Activated T-helper 1 cell treated with anti-CD3 and anti-CD28 coated beads, Interleukin-12 subunit alpha, Interleukin-12 subunit beta, Interleukin-2, Interleukin-4 antibody, amounts not matched to agents 30 ng/mL and 10 ng/mL and 1 ng/mL, durations not matched to agents 14 hours and 24 hours and 36 hours (primary cell): ENCODE measurements at regions of chr12 and their contacts with region 1.

Region 1: DNA sequence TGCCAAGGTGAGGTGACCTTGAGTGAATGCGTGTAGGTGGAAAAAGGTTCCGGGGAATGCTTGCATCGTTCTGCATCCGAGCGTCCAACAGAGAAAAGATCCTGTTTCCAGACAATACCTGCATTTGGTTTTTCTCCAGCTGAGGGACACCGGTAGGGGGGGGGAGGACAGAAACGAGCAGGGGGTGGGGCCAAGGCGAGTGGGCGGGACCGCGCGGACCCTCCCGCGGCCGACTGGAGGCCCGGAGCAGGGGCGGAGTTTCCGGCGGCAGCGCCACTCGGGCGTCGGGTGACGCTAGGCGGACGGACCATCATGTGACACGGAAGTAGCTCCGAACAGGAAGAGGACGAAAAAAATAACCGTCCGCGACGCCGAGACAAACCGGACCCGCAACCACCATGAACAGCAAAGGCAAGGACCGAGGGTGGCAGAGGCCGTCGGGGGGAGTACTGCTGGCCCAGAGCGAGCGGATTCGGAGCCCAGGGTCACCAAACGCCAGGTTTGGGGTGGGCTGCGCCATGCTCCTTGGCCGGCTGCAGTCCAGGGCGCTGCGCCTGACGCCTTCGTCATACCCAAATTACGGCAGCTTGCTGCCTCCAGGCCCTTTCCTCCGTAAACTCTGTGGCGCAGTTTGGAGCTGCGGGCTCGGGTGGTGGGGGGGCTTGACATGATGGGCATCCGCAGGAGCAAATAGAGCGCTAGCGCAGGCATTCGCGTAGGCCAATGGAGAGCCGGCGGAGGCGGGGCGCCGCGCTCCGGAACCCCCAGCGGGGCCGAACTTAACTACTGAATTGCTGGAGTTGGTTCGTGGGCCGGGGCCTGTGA is at the start of gene DAZAP2:
- DNase-seq: peak; percentile 92
- H3K4me3 Mint-ChIP-seq: peak within 1 kb of the TSS; percentile 91
- H3K27ac Mint-ChIP-seq: peak within 1 kb of the TSS; percentile 99
- H3K4me1 Mint-ChIP-seq: peaks cover 45% of the 10 kb centered on the region
- H3K27me3 Mint-ChIP-seq: no peaks in the 10 kb centered on the region
- total RNA-seq, gene DAZAP2: 163 and 169 TPM in 2 replicates

Region 2: GRCh38 chr12:51025836-51026638 is 212.7 kb before region 1 on chr12 and contains the start of gene SLC11A2:
- intact Hi-C with region 1: loop called (anchors 1 kb)
- DNase-seq: peak; percentile 91
- H3K4me3 Mint-ChIP-seq: peak within 1 kb of the TSS; percentile 92
- H3K27ac Mint-ChIP-seq: peak within 1 kb of the TSS; percentile 98
- H3K4me1 Mint-ChIP-seq: peaks cover 55% of the 10 kb centered on the region
- H3K27me3 Mint-ChIP-seq: peaks cover 18% of the 10 kb centered on the region
- total RNA-seq, gene SLC11A2: 56.9 and 63.9 TPM in 2 replicates

Region 3: DNA sequence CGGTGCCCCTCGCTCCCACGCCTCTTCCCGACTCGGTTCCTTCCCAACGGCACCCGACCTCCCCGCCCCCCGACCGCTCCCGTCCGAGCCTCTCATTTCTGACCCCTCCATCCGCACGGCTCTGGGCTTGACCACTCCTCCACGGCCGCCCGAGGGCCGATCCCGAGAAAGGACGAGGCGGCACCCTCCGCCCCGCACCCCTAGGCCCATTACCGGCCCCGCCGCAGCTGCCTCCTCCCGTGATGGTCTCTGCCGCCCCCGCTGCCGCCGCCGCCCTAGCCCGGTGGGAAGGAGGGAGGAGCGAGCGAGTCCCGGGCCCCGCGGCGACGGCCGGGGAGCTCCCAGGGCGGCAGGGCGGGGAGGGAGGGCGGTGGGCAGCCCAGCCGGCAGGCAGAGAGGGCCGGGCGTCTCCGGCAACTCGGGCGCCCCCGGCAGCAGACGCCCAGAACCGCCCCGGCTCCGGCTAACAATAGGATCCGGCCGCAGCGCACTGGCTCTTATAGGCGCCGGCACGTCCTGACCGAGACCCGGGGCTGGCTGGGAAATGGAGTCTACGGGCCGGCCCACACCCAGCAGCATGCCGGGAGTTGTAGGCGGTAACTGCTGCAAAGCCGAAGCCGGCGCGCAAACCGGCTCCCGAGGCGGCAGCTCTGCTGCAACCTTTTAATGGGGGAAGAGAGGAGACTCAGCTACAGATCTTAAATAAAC is 155.4 kb before region 1 on chr12 and contains the start of gene CSRNP2:
- intact Hi-C with region 1: loop called (anchors 1 kb)
- DNase-seq: peak; percentile 94
- H3K4me3 Mint-ChIP-seq: peak within 1 kb of the TSS; percentile 99
- H3K27ac Mint-ChIP-seq: peak within 1 kb of the TSS; percentile 91
- H3K4me1 Mint-ChIP-seq: peaks cover 34% of the 10 kb centered on the region
- H3K27me3 Mint-ChIP-seq: peaks cover 3% of the 10 kb centered on the region
- total RNA-seq, gene CSRNP2: 28.6 and 35.2 TPM in 2 replicates

Region 4: GRCh38 chr12:51217968-51218606 is 20.6 kb before region 1 on chr12 and contains the start of gene POU6F1:
- intact Hi-C with region 1: loop called (anchors 1 kb)
- DNase-seq: peak; percentile 60
- H3K4me3 Mint-ChIP-seq: peak within 1 kb of the TSS; percentile 76
- H3K27ac Mint-ChIP-seq: peak within 1 kb of the TSS; percentile 56
- H3K4me1 Mint-ChIP-seq: peaks cover 21% of the 10 kb centered on the region
- H3K27me3 Mint-ChIP-seq: no peaks in the 10 kb centered on the region
- total RNA-seq, gene POU6F1: 5.2 and 6.7 TPM in 2 replicates

Region 5: DNA sequence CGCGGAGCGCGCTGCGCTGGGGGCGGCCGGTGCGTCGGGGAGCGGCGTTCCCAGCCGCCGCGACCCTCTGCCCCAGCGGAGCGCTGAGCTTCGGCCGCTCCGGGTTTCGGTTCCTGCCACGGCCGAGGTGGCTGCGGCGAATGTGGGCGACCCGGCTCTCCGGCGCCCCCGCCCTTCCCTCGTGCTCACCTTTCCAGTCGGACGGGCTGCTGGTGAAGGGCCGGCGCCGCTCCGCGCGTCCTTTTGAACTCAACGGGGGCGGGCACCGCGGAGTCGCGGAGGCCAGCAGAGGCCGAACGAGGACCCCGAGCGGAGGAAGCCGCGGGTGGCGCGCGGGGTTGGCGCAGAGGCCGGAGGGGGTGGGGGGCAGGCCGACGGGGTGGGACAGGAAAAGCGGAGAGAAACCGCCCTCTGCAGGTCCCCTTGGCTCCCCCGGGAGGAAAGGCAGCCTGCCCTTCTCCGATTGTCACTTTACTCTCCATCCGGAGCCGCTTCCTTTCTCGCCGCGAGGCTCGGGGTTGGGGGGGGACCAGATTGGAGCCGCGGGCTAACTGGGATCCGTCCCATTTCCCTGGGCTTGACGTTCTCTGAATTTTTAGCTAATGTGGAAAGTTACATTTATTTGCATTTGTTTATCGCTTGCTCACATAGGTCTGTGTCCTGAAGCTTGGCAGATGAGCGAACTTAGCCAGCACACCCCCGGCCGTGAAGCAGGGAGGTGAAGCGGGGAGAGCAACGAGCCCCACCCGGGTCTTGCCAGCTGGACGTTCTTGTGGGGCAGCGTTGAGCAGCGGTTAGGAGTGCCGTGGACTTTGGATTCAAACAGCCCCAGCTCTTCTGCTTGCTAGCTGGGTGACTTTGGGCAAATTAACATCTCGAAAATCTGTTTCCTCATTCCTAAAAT is 31.6 kb after region 1 on chr12 and contains the start of gene SMAGP:
- intact Hi-C with region 1: loop called (anchors 2 kb)
- DNase-seq: peak; percentile 33
- H3K4me3 Mint-ChIP-seq: peak within 1 kb of the TSS; percentile 88
- H3K27ac Mint-ChIP-seq: peak within 1 kb of the TSS; percentile 68
- H3K4me1 Mint-ChIP-seq: peaks cover 14% of the 10 kb centered on the region
- H3K27me3 Mint-ChIP-seq: peaks cover 30% of the 10 kb centered on the region
- total RNA-seq, gene SMAGP: 0.16 TPM in 1 of 2 replicates, not detected in the other

Region 6: GRCh38 chr12:51368640-51369517 is 130.2 kb after region 1 on chr12:
- intact Hi-C with region 1: loop called (anchors 1 kb)
- DNase-seq: peak; percentile 89
- H3K4me3 Mint-ChIP-seq: peak overlapping the region; percentile 56
- H3K27ac Mint-ChIP-seq: peak overlapping the region; percentile 70
- H3K4me1 Mint-ChIP-seq: peaks cover 67% of the 10 kb centered on the region
- H3K27me3 Mint-ChIP-seq: peaks cover 7% of the 10 kb centered on the region

Region 7: GRCh38 chr12:51441583-51441982 is 202.9 kb after region 1 on chr12:
- intact Hi-C with region 1: no loop called
- DNase-seq: peak; percentile 1
- H3K4me3 Mint-ChIP-seq: no peak overlapping the region
- H3K27ac Mint-ChIP-seq: no peak overlapping the region
- H3K4me1 Mint-ChIP-seq: peaks cover 42% of the 10 kb centered on the region
- H3K27me3 Mint-ChIP-seq: peaks cover 1% of the 10 kb centered on the region